Right ventricle myocardium inferior (tissue), 1 donor: ENCODE measurements at regions of chr10 and their contacts with region 1.

Region 1: GRCh38 chr10:43420369-43421200 is 11.6 kb upstream of the HNRNPF start:
- DNase-seq: peak; percentile 94
- ATAC-seq: peak; percentile 98

Region 2: GRCh38 chr10:43396928-43397624 is 23.5 kb before region 1 on chr10:
- intact Hi-C with region 1: loop called (anchors 2 kb)
- DNase-seq: peak; percentile 95
- ATAC-seq: peak; percentile 87

Region 3: DNA sequence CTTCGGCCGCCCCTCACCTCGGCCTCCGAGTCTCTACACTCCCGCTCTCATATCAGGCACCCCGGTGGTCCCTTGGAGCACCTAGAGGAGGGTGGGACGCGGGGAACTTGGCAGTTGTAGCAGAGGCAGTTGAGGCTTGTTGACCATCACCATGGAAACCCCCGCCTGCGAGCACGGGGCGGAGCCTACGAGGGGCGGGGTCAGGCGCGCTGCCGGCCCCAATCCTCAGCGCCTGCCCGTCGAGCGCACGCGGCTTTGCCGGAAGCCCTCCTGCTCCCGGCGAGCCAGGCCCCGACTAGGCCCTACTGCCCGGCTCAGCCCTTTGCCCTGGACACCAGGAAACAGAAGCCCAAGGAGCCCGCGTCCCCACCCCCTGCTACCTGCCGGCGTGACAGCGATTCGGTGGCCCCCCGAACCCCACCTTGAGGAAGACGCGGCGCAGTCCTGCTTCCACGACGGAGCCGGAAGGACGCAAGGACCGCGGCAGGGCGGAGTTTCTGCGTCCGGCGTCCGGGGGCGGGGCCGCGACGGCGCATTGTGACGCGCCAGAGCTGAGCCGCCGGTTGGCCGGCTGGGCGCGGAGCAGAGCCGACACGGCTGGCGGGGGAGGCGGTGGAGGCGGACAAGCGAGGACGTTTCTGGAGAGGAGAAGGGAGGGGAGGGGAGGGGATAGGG is 11.7 kb before region 1 on chr10 and contains the start of gene HNRNPF:
- intact Hi-C with region 1: loop called (anchors 1 kb)
- DNase-seq: peak; percentile 97
- ATAC-seq: peak; percentile 93
- total RNA-seq, gene HNRNPF: 87.6 TPM

Region 4: GRCh38 chr10:43436400-43437140 is 16.0 kb after region 1 on chr10 and contains the start of gene ZNF487:
- intact Hi-C with region 1: loop called (anchors 1 kb)
- DNase-seq: peak; percentile 96
- ATAC-seq: peak; percentile 99
- total RNA-seq, gene ZNF487: 2.7 TPM